CD4-positive, alpha-beta memory T cell (primary cell): ENCODE measurements at regions of chr10 and their contacts with region 1.

Region 1: GRCh38 chr10:69588386-69588785 is 15.2 kb upstream of the NEUROG3 start:
- DNase-seq: no peak
- H3K4me3 ChIP-seq: no peak overlapping the region
- H3K4me3 Mint-ChIP-seq: peak overlapping the region in 1 of 8 donors; percentile 38
- H3K27ac ChIP-seq: no peak overlapping the region
- H3K27ac Mint-ChIP-seq: peak overlapping the region in 3 of 7 donors; percentile 25 to 64 (median 43)
- H3K4me1 ChIP-seq: peaks cover 12% of the 10 kb centered on the region
- H3K4me1 Mint-ChIP-seq: peaks cover 11 to 16% (median 13%) of the 10 kb centered on the region in 4 donors
- H3K27me3 ChIP-seq: no peaks in the 10 kb centered on the region
- H3K27me3 Mint-ChIP-seq: no peaks in the 10 kb centered on the region

Region 2: DNA sequence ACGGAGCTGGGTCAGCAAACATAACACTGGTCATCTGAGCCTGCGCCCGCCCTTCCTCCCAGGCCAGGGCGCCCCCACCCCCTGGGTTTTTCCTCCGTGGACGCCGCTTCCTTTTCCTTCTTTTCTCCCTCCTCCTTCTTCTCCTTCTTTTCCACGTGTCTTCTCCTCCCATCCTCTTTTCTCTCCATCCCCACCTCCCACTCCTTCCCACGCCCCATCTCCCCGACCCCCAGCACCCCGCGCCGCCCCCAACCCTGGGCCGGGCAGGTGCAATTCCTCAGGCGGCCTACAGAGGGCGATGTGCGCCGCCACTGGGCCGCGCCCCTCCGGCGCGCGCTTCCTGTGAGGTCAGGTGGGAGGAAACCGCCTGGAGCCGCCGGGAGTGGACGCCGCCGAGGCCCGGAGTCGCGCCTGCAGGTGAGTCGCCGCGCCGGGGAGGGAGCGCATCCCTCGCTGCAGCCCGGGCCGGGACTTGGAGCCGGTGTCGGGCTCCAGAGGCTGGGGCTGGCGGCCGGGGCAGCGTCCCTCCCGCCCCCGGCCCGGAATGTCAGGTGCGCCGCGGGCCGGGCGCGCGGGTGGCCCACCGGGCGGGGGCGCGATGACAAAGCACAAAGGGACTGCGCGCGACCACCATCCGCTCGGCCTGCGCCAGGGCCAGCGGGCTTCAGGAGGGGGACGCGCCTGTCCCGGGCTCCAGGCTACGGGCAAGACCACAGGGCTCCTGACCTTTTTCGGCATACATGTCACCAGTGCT is 41.7 kb after region 1 on chr10 and contains the start of gene FAM241B:
- CTCF ChIA-PET with region 1: interaction called, 12 read pairs
- POLR2A ChIA-PET with region 1: no interaction called
- intact Hi-C with region 1: no loop called
- DNase-seq: peak; percentile 75 to 81 (median 78)
- H3K4me3 ChIP-seq: peak within 1 kb of the TSS; percentile 49 to 69
- H3K4me3 Mint-ChIP-seq: peak within 1 kb of the TSS; percentile 63 to 81 (median 78)
- H3K27ac ChIP-seq: peak within 1 kb of the TSS; percentile 26
- H3K27ac Mint-ChIP-seq: peak within 1 kb of the TSS; percentile 51 to 81 (median 70)
- H3K4me1 ChIP-seq: peaks cover 25% of the 10 kb centered on the region
- H3K4me1 Mint-ChIP-seq: peaks cover 14 to 22% (median 18%) of the 10 kb centered on the region in 4 donors
- H3K27me3 ChIP-seq: no peaks in the 10 kb centered on the region
- H3K27me3 Mint-ChIP-seq: no peaks in the 10 kb centered on the region
- total RNA-seq, gene FAM241B: 9.4 to 10.7 TPM

Region 3: DNA sequence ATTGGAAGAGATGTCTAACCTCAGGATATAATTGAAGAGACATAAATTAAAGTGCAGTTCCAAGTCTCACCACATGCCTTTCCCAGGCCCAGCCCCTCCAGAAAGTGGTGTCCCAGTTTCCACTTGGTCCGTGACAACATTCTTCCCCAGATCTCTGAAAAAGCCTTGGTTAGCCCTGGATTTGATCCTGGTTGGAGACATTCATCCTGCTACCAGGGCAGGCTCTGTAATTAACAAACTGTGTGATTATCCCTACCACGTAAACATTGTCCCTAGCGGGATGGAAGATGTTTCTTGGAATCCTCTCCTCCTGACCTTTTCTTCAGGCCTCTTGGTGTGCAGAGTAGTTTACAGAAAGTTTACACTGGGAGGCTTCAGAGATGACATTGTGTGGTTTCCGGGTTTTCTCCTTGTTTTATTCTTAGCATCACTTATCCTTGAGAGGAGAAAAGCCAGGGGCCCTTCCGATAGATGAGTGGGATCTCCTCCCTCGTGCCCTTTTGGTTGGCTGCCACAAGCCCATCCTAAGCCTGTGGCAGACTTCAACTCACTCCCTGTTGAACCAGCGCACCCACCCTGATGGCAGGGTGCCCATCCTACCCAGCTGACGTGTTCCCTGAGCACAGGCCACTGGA is 297.1 kb after region 1 on chr10:
- CTCF ChIA-PET with region 1: no interaction called
- POLR2A ChIA-PET with region 1: no interaction called
- intact Hi-C with region 1: no loop called
- DNase-seq: no peak
- H3K4me3 ChIP-seq: no peak overlapping the region
- H3K4me3 Mint-ChIP-seq: no peak overlapping the region
- H3K27ac ChIP-seq: no peak overlapping the region
- H3K27ac Mint-ChIP-seq: peak overlapping the region in 1 of 7 donors; percentile 39
- H3K4me1 ChIP-seq: no peaks in the 10 kb centered on the region
- H3K4me1 Mint-ChIP-seq: no peaks in the 10 kb centered on the region
- H3K27me3 ChIP-seq: no peaks in the 10 kb centered on the region
- H3K27me3 Mint-ChIP-seq: peaks cover 19 to 22% of the 10 kb centered on the region in 2 donors